SK-N-SH (cell line): ENCODE measurements at regions of chr2 and their contacts with region 1.

Region 1: DNA sequence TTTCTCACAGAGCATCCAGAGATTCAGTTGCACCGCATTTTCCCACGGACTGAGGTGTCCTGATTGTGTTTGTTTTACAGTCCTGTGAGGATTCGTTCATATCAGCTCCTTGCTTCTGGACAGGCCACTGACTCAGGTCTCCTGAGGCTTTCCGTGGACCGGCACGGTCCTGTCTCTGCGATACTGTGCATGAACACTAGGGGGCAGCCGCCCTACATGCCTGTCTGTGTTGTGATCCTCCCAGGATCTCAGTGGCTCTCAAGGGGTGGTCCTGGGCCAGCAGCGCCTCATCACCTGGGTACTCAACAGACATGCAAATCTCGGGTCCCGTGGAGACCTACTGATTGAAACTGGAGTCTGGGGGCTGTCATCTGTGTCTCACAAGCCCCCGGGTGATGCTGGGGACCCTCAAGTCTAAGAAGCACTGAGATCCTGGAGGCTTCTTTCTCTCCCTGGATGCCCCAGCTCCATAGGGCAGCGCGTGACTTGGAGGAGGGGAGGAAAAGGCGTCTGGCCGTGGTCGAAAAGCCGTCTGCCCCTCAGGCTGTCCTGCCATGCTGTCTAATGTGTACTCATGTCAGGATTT is 28.9 kb downstream of the IL1R2 start:
- DNase-seq: peak; percentile 81
- H3K4me3 ChIP-seq: no peak overlapping the region
- H3K27ac ChIP-seq: no peak overlapping the region
- H3K4me1 ChIP-seq: no peaks in the 10 kb centered on the region
- H3K27me3 ChIP-seq: no peaks in the 10 kb centered on the region
- CTCF ChIP-seq: peak; percentile 96
- EP300 ChIP-seq: no peak
- RAD21 ChIP-seq: peak; percentile 93

Region 2: GRCh38 chr2:101679037-101679726 is 341.5 kb before region 1 on chr2:
- CTCF ChIA-PET with region 1: no interaction called
- POLR2A ChIA-PET with region 1: no interaction called
- DNase-seq: no peak
- H3K4me3 ChIP-seq: no peak overlapping the region
- H3K27ac ChIP-seq: no peak overlapping the region
- H3K4me1 ChIP-seq: no peaks in the 10 kb centered on the region
- H3K27me3 ChIP-seq: no peaks in the 10 kb centered on the region
- CTCF ChIP-seq: no peak
- EP300 ChIP-seq: no peak
- RAD21 ChIP-seq: no peak

Region 3: GRCh38 chr2:101998896-101999789 is 21.5 kb before region 1 on chr2:
- CTCF ChIA-PET with region 1: interaction called, 17 read pairs
- POLR2A ChIA-PET with region 1: no interaction called
- DNase-seq: no peak
- H3K4me3 ChIP-seq: no peak overlapping the region
- H3K27ac ChIP-seq: no peak overlapping the region
- H3K4me1 ChIP-seq: no peaks in the 10 kb centered on the region; a peak in 1 of 4 replicates
- H3K27me3 ChIP-seq: peaks cover 42% of the 10 kb centered on the region; the same call in 1 of the 2 replicates
- CTCF ChIP-seq: no peak
- EP300 ChIP-seq: no peak
- RAD21 ChIP-seq: no peak

Region 4: DNA sequence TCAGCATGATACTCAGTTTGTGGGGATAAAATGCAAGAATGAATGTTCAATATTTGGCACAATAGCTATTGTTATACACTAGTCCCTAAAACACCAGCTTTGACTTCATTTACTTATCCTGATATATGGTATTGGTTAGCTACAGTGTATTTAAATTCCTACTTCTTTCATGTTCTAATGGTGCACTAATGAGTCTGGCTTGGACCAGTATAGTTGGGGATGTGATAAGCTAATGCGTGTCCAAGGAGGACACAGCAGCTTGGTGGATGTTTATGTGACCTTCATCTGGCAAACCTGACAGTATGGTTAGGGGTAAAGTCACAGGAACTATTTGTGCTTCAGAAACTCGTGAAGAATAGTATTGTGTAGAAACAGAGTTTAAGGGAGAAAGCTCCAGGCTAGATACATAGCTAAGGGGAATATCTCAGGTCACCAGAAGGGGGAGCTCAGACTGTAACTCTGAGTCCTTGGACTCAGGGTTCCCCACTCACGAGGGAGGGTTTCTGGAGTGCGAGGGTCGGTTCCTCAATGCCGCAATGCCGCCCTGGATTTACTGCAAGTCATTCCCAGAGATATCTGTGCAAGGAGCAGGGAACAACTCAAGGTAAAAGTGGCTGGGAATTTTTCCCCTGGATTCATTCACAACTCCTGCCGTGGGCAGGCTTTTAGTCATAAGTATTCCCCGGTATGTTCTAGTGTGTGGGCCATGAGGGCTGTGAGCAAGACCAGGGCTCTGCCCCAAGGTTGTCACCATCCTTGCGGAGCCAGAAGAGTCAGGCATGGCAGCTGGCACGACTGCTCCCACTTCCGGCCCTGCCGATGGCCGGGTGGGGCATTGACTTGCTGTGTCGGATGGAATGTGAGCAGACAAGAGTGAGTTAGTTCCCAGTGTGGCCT is 14.5 kb before region 1 on chr2:
- CTCF ChIA-PET with region 1: interaction called, 35 read pairs
- POLR2A ChIA-PET with region 1: no interaction called
- DNase-seq: peak; percentile 47
- H3K4me3 ChIP-seq: no peak overlapping the region
- H3K27ac ChIP-seq: no peak overlapping the region
- H3K4me1 ChIP-seq: no peaks in the 10 kb centered on the region
- H3K27me3 ChIP-seq: no peaks in the 10 kb centered on the region
- CTCF ChIP-seq: peak; percentile 79
- EP300 ChIP-seq: no peak
- RAD21 ChIP-seq: peak; percentile 56

Region 5: DNA sequence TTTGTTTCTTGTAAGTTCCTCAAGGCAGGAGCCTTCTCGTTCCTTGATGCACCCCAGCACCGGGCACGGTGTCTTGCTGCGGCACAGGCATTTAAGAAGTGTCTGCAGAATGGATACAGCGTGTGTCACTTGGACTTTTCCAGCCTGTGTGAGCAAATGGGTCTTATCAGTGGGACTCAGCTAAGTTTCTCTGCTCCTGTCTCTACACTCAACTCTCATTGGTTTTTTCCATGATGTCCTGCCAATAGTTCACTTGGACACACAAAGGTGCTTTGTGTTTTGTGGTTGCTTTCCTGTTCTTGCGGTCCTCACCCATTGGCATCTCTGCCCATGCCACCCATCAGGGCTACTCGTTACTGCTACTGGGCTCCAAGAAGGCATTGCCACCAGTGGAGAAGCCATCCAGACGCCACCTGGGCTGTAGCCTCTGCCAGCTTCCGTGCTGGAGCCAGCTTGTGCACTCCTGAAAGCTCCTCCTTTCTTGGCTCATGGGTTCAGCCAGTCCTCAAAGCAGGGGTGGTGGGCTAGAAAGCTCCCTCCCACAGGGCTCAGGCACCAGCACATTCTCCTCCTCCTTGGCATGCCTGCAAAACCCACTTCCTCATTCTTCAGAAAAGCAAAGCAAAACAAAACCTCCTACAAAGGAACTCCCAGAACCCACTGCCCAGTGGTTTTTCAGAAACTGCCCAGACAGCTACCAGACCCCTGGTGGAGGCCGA is 12.5 kb after region 1 on chr2:
- CTCF ChIA-PET with region 1: interaction called, 34 read pairs
- POLR2A ChIA-PET with region 1: no interaction called
- DNase-seq: no peak
- H3K4me3 ChIP-seq: no peak overlapping the region
- H3K27ac ChIP-seq: peak overlapping the region in 1 of 2 experiments; percentile 8; a peak in 1 of 4 replicates
- H3K4me1 ChIP-seq: peaks cover 0 to 12% of the 10 kb centered on the region in 2 experiments; a peak in 2 of 4 replicates
- H3K27me3 ChIP-seq: no peaks in the 10 kb centered on the region
- CTCF ChIP-seq: no peak
- EP300 ChIP-seq: no peak
- RAD21 ChIP-seq: no peak

Region 6: DNA sequence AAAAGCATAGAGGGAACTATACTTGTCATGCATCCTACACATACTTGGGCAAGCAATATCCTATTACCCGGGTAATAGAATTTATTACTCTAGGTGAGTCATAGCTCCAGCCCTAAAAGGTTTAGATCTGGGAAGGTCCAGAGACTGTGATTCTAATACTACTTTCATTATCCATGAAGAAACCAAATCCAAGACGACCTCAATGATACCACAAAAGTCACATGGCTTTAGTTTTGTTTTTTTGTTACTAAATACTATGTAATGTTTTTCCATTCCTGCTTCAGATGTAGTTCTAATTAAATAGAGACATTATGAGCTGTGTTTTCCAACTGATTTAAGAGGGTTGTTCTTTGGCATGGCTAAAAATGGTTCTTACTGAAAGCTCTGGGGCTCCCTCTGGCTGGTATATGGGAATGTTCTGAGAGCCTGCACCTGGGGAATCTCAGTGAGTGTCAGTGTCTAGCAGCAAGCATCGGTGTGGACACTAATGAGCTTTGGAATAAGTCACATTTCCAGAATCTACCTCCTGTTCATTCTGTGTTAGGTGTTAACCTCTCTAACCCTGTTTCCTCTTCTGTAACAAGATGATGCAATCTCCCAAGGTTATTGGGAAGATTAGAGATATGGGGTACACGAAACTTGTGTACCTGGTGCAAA is 145.6 kb after region 1 on chr2:
- CTCF ChIA-PET with region 1: interaction called, 11 read pairs
- POLR2A ChIA-PET with region 1: no interaction called
- DNase-seq: no peak
- H3K4me3 ChIP-seq: no peak overlapping the region
- H3K27ac ChIP-seq: peak overlapping the region in 1 of 2 experiments; percentile 52; a peak in 1 of 4 replicates
- H3K4me1 ChIP-seq: no peaks in the 10 kb centered on the region
- H3K27me3 ChIP-seq: no peaks in the 10 kb centered on the region
- CTCF ChIP-seq: peak; percentile 62
- EP300 ChIP-seq: no peak
- RAD21 ChIP-seq: peak; percentile 58

Region 7: GRCh38 chr2:102235491-102235890 is 214.8 kb after region 1 on chr2:
- CTCF ChIA-PET with region 1: interaction called, 159 read pairs
- POLR2A ChIA-PET with region 1: no interaction called
- DNase-seq: no peak
- H3K4me3 ChIP-seq: no peak overlapping the region
- H3K27ac ChIP-seq: no peak overlapping the region
- H3K4me1 ChIP-seq: peaks cover 0 to 1% of the 10 kb centered on the region in 2 experiments; a peak in 1 of 4 replicates
- H3K27me3 ChIP-seq: no peaks in the 10 kb centered on the region
- CTCF ChIP-seq: peak; percentile 31; the same call in 1 of the 2 replicates
- EP300 ChIP-seq: no peak
- RAD21 ChIP-seq: no peak